Activated CD8-positive, alpha-beta T cell treated with anti-CD3 and anti-CD28 coated beads, Interleukin-2, amount 10 ng/mL, durations not matched to agents 7 days and 5 days (primary cell): ENCODE measurements at regions of chr19 and their contacts with region 1.

Region 1: DNA sequence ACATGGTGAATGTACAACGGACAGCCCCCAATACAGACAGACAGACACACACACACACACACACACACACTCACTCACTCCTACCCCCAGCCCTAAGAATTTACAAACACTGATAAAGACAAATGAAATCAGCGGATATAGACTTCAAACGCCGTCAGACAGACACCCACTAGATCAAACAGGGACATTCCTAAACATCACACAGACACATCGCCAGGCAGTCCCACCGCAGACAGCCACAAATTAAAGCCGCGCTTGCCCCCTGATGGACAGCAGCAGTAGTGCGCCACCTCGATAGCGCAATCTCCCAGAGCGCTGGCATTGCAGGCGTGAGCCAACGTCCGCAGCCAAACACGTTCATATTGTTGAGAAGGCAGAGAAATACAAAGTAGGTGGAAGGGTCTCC is 24.7 kb upstream of the ADGRE1 start:
- DNase-seq: peak; percentile 94
- ATAC-seq: peak; percentile 82
- H3K4me3 Mint-ChIP-seq: peak overlapping the region; percentile 77
- H3K27ac Mint-ChIP-seq: peak overlapping the region; percentile 71
- H3K4me1 Mint-ChIP-seq: peaks cover 23% of the 10 kb centered on the region
- H3K27me3 Mint-ChIP-seq: no peaks in the 10 kb centered on the region

Region 2: GRCh38 chr19:6639439-6639838 is 223.2 kb before region 1 on chr19:
- CTCF ChIA-PET with region 1: interaction called, 18 read pairs
- POLR2A ChIA-PET with region 1: no interaction called
- DNase-seq: peak; percentile 75
- ATAC-seq: peak; percentile 71
- H3K4me3 Mint-ChIP-seq: no peak overlapping the region
- H3K27ac Mint-ChIP-seq: peak overlapping the region; percentile 94
- H3K4me1 Mint-ChIP-seq: peaks cover 64% of the 10 kb centered on the region
- H3K27me3 Mint-ChIP-seq: no peaks in the 10 kb centered on the region

Region 3: DNA sequence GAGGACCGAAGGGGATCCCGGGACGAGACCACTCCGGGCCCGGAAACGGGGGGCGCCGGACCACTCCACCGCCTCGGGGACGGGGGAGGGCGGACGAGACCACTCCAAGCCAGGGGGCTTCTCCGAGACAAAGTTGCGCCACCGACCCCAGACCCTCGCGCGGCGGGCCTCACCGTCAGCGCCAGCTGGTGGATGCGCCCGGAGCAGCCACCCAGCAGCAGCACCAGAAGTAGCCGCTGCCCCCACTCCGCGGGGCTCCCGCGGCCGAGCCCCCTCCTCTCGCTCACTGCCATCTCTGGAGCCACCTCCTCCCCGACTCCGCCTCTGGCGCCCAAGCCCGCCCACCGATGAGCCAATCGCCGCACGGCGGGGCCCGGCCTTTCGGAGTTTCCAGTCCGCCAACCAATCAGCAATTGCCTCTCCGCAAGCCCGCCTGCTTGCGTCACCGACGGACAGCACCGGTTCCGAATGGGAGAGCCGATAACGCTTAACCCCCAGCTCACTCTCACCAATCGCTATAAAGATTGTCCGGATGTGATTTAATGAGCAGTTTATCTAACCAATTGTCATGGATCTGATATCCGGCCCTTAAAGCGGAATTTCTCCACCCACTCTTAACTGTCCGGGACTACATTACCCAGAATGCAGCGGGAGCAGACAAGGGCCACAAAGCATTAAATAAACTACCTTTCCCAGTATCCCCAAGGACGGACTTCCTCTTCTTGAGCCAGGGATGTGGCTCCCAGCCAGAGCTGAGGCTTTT is 125.2 kb before region 1 on chr19 and contains the start of gene GPR108:
- CTCF ChIA-PET with region 1: interaction called, 130 read pairs
- POLR2A ChIA-PET with region 1: interaction called, 20 read pairs
- DNase-seq: peak; percentile 100
- ATAC-seq: peak; percentile 81
- H3K4me3 Mint-ChIP-seq: peak within 1 kb of the TSS; percentile 98
- H3K27ac Mint-ChIP-seq: peak within 1 kb of the TSS; percentile 100
- H3K4me1 Mint-ChIP-seq: peaks cover 40% of the 10 kb centered on the region
- H3K27me3 Mint-ChIP-seq: no peaks in the 10 kb centered on the region
- total RNA-seq, gene GPR108: 76.7 to 85.6 TPM

Region 4: DNA sequence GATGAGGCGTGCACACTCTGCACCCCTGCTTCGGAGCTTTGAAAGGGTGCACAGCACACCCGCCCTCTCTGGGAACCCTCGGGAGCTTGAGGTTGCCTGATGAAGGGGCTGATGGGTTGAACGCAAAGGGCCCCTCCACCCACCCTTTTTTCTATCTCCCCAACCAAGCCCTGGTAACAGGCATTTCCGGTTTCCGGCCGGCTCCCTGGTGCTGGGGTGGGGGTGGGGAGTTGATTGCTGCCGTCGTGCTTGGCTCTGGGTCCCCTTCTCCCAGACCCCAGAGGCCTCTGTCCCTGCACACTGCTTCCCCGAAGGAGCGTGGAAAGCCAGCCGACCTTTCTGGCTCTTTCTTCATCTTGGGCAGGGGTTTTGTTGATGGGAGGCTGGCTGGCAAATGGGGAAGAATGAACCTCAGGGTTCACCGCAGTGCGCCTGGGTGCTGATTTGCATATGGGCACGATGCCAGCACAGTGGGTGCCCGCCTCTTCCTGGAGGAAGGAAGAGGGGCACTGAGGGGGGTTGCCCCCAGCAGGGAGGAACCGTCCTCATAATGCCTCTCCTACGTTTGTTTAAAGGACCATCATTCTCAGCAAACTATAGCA is 61.1 kb before region 1 on chr19:
- CTCF ChIA-PET with region 1: interaction called, 19 read pairs
- POLR2A ChIA-PET with region 1: no interaction called
- DNase-seq: peak; percentile 91
- ATAC-seq: peak; percentile 79
- H3K4me3 Mint-ChIP-seq: peak overlapping the region; percentile 84
- H3K27ac Mint-ChIP-seq: peak overlapping the region; percentile 97
- H3K4me1 Mint-ChIP-seq: peaks cover 60% of the 10 kb centered on the region
- H3K27me3 Mint-ChIP-seq: no peaks in the 10 kb centered on the region

Region 5: GRCh38 chr19:6876748-6877147 is 14.1 kb after region 1 on chr19:
- CTCF ChIA-PET with region 1: interaction called, 10 read pairs
- POLR2A ChIA-PET with region 1: no interaction called
- DNase-seq: no peak
- ATAC-seq: no peak
- H3K4me3 Mint-ChIP-seq: no peak overlapping the region
- H3K27ac Mint-ChIP-seq: no peak overlapping the region
- H3K4me1 Mint-ChIP-seq: peaks cover 5% of the 10 kb centered on the region
- H3K27me3 Mint-ChIP-seq: no peaks in the 10 kb centered on the region

Region 6: GRCh38 chr19:6930190-6930589 is 67.5 kb after region 1 on chr19:
- CTCF ChIA-PET with region 1: interaction called, 10 read pairs
- POLR2A ChIA-PET with region 1: no interaction called
- DNase-seq: no peak
- ATAC-seq: no peak
- H3K4me3 Mint-ChIP-seq: no peak overlapping the region
- H3K27ac Mint-ChIP-seq: no peak overlapping the region
- H3K4me1 Mint-ChIP-seq: peaks cover 3% of the 10 kb centered on the region
- H3K27me3 Mint-ChIP-seq: no peaks in the 10 kb centered on the region

Region 7: DNA sequence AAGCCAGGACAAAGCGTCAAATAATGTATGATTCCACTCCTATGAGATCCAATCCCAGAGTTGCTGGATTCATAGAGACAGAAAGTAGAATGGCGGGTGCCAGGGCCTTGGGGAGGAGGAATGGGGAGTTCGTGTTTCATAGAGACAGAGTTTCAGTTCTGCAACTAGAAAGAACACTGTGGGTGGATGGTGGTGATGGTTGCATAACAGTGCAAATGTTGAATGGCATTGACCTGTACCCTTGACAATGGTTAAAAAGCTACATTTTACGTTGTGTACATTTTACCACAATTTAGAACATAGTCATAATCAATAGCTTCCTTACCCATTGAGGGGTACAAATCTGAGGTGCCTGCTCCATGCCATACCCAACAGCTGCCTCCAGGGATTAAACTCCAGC is 125.2 kb after region 1 on chr19:
- CTCF ChIA-PET with region 1: no interaction called
- POLR2A ChIA-PET with region 1: no interaction called
- DNase-seq: no peak
- ATAC-seq: no peak
- H3K4me3 Mint-ChIP-seq: no peak overlapping the region
- H3K27ac Mint-ChIP-seq: no peak overlapping the region
- H3K4me1 Mint-ChIP-seq: no peaks in the 10 kb centered on the region
- H3K27me3 Mint-ChIP-seq: no peaks in the 10 kb centered on the region